PC-9 (cell line): ENCODE measurements at regions of chr7 and their contacts with region 1.

Region 1: DNA sequence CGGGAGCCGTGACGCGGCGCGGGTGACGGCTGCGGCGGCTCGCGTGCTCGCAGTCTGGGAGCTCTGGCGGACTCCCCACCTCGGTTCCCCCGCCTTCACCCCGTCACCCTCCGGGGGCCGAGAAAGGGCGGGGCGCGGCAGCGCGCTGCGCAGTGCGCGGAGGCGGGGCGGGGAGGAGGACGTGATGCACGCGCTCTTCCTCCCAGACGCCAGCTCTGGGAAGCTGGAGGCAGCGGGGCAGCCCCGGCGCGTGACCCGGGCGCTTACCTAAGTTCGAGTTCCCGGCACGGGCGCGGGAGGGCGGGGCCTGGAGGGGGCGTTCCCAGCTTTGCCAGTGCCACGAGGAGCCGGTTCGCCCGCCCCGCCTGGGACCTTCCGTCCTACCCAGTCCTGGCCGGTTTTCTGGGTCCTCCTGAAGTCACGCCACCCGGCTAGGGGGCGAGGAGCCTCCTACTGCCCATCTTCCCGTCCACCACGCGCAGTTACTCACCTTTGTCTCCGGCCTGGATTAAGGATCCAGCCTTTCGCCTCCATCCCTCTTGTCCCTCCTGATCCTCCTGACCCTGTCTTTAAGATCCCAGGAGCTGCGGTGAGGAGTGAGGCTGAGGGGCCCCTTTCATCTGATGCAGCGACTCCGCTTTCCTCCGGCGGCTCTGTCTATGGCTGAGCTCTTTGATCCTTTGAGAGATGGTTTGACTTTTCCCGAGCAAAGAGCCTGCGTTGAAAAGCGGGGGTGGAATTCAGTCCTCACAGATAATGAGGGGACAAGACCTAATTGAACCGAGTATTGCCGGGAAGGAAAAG is 470 bp upstream of the NAMPT start:
- DNase-seq: peak; percentile 94 to 100
- H3K4me3 ChIP-seq: peak overlapping the region; percentile 91
- H3K27ac ChIP-seq: peak overlapping the region; percentile 99
- H3K4me1 ChIP-seq: peaks cover 45% of the 10 kb centered on the region
- H3K27me3 ChIP-seq: no peaks in the 10 kb centered on the region
- CTCF ChIP-seq: no peak

Region 2: DNA sequence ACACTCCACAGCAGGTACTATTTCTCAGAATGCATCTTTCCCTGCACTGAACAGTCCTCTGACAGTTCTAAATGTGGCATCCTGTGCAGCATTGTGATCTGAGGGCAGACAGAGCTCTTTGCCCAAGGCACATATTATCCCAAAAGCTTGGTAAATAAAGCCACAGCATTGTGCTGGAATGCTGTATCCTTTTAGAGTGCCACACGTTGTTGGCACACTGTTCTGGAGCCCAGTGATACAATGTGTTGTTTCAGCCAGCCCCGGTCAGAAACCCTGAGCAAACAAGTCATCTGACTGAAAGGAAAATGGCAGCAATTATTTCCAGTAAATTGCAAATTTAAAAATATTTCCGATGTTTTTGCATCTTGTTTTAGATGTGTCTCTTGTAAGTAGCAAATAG is 45.8 kb before region 1 on chr7:
- CTCF ChIA-PET with region 1: interaction called, 4 read pairs
- POLR2A ChIA-PET with region 1: interaction called, 19 read pairs
- intact Hi-C with region 1: no loop called
- DNase-seq: peak; percentile 39 to 57
- H3K4me3 ChIP-seq: no peak overlapping the region
- H3K27ac ChIP-seq: no peak overlapping the region
- H3K4me1 ChIP-seq: 0 out of 2 replicates have a peak, but pooled peaks cover 11% of the 10 kb centered on the region
- H3K27me3 ChIP-seq: no peaks in the 10 kb centered on the region
- CTCF ChIP-seq: no peak

Region 3: GRCh38 chr7:106377847-106378361 is 92.7 kb after region 1 on chr7:
- CTCF ChIA-PET with region 1: no interaction called
- POLR2A ChIA-PET with region 1: interaction called, 14 read pairs
- intact Hi-C with region 1: no loop called
- DNase-seq: peak; percentile 69 to 70
- H3K4me3 ChIP-seq: no peak overlapping the region
- H3K27ac ChIP-seq: peak overlapping the region; percentile 88
- H3K4me1 ChIP-seq: peaks cover 26% of the 10 kb centered on the region
- H3K27me3 ChIP-seq: no peaks in the 10 kb centered on the region
- CTCF ChIP-seq: no peak

Region 4: DNA sequence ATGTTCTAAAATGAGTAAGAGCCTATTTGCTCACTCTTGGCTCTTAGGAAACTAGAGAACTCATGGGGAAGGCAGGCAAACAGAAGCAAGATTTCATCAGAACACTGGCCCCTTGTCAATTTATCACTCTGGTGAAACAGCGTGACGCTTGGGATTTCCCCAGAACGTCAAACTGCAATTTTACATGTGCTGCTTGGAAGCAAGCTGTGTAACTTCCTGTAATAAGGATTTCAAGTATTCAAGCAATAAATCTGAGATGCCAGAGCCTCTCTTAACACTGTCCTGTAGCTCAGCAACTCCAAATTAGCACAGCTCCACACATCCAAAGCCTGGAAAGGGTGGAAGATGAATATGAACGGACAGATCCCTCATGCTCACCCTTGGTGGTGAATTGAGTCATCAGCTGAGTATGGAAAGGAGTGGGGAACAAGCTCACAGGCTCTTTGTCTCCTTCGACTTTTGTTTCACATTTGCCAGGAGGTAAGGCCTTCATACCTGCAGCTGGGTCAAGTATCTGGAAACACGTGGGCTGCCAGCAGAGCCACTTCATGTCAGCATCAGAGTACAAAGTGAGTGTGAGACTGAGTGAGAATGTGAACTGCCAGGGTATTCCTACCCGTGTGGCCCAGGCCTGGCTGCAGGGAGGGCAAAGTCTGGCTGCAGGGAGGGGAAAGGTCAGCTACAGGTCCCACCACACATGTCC is 139.9 kb after region 1 on chr7:
- CTCF ChIA-PET with region 1: no interaction called
- POLR2A ChIA-PET with region 1: interaction called, 12 read pairs
- intact Hi-C with region 1: no loop called
- DNase-seq: peak; percentile 57 to 89
- H3K4me3 ChIP-seq: peak overlapping the region; percentile 30; the same call in 1 of the 2 replicates
- H3K27ac ChIP-seq: peak overlapping the region; percentile 92
- H3K4me1 ChIP-seq: peaks cover 35% of the 10 kb centered on the region
- H3K27me3 ChIP-seq: no peaks in the 10 kb centered on the region
- CTCF ChIP-seq: no peak

Region 5: DNA sequence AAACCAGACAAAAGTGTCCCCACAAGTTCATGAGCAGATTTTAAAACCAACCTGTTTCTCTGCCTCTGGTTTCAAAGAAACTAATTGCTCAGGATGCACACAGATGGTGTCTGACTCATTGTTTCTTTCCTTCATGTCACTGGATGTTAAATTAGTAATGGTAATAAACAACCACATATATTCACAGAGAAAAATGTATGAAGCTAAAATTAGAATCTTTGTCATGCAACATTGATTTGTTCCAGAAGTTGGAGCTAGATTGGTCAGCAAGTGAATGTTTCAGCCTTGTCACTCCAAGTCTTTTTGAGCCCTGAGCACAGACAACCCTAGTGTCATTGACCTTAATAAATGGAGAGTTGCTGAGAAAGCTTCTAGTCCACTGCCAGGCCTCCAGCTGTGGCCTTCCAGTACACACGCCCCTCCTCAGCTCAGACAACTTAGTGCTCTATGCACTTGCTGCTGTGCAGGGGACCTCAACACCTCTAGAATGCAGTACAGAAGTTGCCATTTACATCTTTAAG is 199.8 kb after region 1 on chr7:
- CTCF ChIA-PET with region 1: interaction called, 11 read pairs
- POLR2A ChIA-PET with region 1: interaction called, 6 read pairs
- intact Hi-C with region 1: no loop called
- DNase-seq: peak in 1 of 2 experiments; percentile 37
- H3K4me3 ChIP-seq: no peak overlapping the region
- H3K27ac ChIP-seq: peak overlapping the region; percentile 77
- H3K4me1 ChIP-seq: peaks cover 35% of the 10 kb centered on the region
- H3K27me3 ChIP-seq: no peaks in the 10 kb centered on the region
- CTCF ChIP-seq: no peak